MCF 10A (cell line): ENCODE measurements at regions of chr1 and their contacts with region 1.

Region 1: DNA sequence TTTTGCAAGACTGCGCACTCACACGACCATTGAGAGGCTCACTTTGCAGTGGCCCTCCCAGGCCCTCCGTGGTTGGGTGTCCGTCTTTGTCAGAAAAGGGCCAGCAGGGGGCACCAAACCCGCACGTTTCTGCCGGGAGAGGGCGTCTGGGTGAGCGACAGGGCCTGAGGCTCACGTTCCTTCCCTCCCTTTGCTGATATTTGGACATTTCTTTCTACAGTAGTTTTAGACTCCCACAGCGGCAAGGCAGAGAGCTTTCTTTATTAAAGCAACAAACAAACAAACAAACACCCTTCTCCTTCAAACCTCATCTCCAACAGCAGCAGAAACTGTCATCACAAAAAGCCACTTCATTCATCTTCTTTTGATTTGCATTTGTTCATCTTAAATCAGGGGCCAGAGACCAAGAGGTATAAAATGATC is 79.2 kb upstream of the WDR26 start:
- DNase-seq: peak; percentile 97
- H3K4me3 Mint-ChIP-seq: no peak overlapping the region
- H3K27ac Mint-ChIP-seq: no peak overlapping the region
- H3K4me1 Mint-ChIP-seq: peaks cover 14% of the 10 kb centered on the region
- H3K27me3 Mint-ChIP-seq: no peaks in the 10 kb centered on the region
- CTCF ChIP-seq: peak; percentile 100

Region 2: GRCh38 chr1:224359207-224359606 is 154.6 kb before region 1 on chr1:
- CTCF ChIA-PET with region 1: no interaction called
- POLR2A ChIA-PET with region 1: no interaction called
- intact Hi-C with region 1: no loop called
- DNase-seq: no peak
- H3K4me3 Mint-ChIP-seq: peak overlapping the region; percentile 89
- H3K27ac Mint-ChIP-seq: peak overlapping the region; percentile 74
- H3K4me1 Mint-ChIP-seq: peaks cover 33% of the 10 kb centered on the region
- H3K27me3 Mint-ChIP-seq: no peaks in the 10 kb centered on the region
- CTCF ChIP-seq: no peak

Region 3: DNA sequence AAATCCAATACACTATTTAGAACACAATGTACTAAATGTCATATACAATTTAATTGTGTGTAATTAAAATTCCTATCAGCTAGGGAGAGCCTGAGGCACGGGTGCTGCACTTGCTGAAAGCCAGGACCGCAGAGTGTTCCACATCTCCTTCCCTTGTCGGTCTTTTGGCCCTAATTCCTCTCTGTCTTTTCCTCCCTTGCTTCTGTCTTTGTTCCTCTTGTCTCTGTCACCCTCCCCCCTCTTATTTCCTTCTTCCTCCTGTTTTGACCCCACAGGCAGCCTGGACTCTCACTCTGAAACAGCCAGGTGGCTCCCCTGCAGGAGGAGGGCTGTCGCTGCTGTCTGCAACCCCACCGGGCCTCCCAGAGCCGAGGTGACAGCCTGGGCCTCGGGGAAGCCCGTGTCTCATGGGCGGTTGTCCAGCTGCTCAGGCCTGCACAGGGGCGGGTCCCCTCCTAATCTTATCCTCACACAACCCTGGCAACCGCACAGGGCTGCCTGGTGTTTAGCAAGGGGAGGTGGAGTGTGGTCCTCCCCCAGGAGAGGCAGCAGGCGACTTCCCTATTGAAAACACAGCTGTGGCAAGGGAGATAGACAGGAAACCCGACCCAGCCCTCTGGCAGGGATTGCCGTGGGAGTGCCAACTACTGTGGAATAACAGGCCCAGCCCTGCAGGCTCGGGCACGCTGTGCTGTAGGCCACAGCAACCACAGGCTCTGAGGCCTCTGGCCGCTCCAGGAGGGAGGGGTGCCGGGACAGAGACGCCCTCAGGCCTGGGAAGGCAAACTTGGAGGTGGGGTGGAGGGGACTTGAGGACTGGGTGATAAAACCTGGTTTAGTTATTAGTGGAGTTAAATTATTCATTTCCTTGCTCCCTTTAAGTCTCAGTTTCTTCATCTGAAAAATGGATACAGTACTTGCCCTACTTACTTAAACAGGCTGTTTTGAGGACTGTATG is 10.4 kb before region 1 on chr1:
- CTCF ChIA-PET with region 1: interaction called, 84 read pairs
- POLR2A ChIA-PET with region 1: interaction called, 10 read pairs
- intact Hi-C with region 1: no loop called
- DNase-seq: peak; percentile 100
- H3K4me3 Mint-ChIP-seq: peak overlapping the region; percentile 48
- H3K27ac Mint-ChIP-seq: peak overlapping the region; percentile 92
- H3K4me1 Mint-ChIP-seq: peaks cover 72% of the 10 kb centered on the region
- H3K27me3 Mint-ChIP-seq: no peaks in the 10 kb centered on the region
- CTCF ChIP-seq: peak; percentile 10

Region 4: DNA sequence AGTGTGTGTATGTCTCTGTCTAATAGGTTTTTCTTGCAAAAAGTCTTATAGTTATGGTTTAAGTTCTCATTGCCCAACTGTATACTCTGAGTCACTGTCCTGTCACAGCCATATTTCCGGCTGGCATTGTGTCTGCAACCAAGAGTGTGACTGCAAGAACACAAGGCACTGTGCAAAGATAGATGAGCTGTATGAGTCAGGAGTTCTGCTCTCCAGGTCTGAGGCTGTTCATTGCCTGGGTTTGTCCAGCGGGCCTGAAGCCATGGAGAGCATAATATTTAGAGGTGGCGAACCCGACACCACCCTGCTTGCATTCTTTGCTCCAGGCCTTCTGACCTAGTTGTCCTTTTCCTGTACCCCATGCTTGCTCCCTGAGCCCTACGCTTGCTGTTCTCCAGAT is 51.4 kb after region 1 on chr1:
- CTCF ChIA-PET with region 1: interaction called, 13 read pairs
- POLR2A ChIA-PET with region 1: interaction called, 3 read pairs
- intact Hi-C with region 1: loop called (anchors 2 kb)
- DNase-seq: peak; percentile 100
- H3K4me3 Mint-ChIP-seq: peak overlapping the region; percentile 7
- H3K27ac Mint-ChIP-seq: peak overlapping the region; percentile 53
- H3K4me1 Mint-ChIP-seq: peaks cover 30% of the 10 kb centered on the region
- H3K27me3 Mint-ChIP-seq: no peaks in the 10 kb centered on the region
- CTCF ChIP-seq: no peak

Region 5: DNA sequence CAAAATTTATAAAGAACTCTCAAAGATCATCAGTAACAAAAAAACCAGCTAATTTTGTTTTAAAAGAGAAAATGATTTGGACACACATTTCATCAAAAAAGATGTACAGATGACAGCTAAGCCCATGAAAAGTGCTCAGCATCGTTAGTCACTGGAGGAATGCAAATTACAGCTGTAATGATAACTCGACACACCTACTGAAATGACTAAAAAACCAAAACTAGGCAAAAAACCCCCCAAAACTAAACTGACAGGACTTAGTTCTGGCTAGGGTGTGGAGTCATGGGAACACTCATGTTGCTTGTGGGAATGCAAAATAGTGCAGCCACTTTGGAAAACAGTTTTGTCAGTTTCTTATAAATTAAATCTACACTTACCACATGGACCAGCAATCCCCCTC is 161.8 kb after region 1 on chr1:
- CTCF ChIA-PET with region 1: interaction called, 22 read pairs
- POLR2A ChIA-PET with region 1: no interaction called
- intact Hi-C with region 1: no loop called
- DNase-seq: no peak
- H3K4me3 Mint-ChIP-seq: no peak overlapping the region
- H3K27ac Mint-ChIP-seq: no peak overlapping the region
- H3K4me1 Mint-ChIP-seq: no peaks in the 10 kb centered on the region
- H3K27me3 Mint-ChIP-seq: no peaks in the 10 kb centered on the region
- CTCF ChIP-seq: no peak

Region 6: GRCh38 chr1:224851210-224851847 is 337.5 kb after region 1 on chr1:
- CTCF ChIA-PET with region 1: interaction called, 624 read pairs
- POLR2A ChIA-PET with region 1: interaction called, 7 read pairs
- intact Hi-C with region 1: loop called (anchors 1 kb)
- DNase-seq: peak; percentile 85
- H3K4me3 Mint-ChIP-seq: no peak overlapping the region
- H3K27ac Mint-ChIP-seq: no peak overlapping the region
- H3K4me1 Mint-ChIP-seq: peaks cover 6% of the 10 kb centered on the region
- H3K27me3 Mint-ChIP-seq: peaks cover 9% of the 10 kb centered on the region
- CTCF ChIP-seq: peak; percentile 98

Region 7: GRCh38 chr1:224906340-224906739 is 392.5 kb after region 1 on chr1:
- CTCF ChIA-PET with region 1: interaction called, 16 read pairs
- POLR2A ChIA-PET with region 1: no interaction called
- intact Hi-C with region 1: no loop called
- DNase-seq: no peak
- H3K4me3 Mint-ChIP-seq: no peak overlapping the region
- H3K27ac Mint-ChIP-seq: no peak overlapping the region
- H3K4me1 Mint-ChIP-seq: no peaks in the 10 kb centered on the region
- H3K27me3 Mint-ChIP-seq: peaks cover 56% of the 10 kb centered on the region
- CTCF ChIP-seq: no peak